ENCODE measurements at regions of chr13 and their contacts with region 1.

Region 1: DNA sequence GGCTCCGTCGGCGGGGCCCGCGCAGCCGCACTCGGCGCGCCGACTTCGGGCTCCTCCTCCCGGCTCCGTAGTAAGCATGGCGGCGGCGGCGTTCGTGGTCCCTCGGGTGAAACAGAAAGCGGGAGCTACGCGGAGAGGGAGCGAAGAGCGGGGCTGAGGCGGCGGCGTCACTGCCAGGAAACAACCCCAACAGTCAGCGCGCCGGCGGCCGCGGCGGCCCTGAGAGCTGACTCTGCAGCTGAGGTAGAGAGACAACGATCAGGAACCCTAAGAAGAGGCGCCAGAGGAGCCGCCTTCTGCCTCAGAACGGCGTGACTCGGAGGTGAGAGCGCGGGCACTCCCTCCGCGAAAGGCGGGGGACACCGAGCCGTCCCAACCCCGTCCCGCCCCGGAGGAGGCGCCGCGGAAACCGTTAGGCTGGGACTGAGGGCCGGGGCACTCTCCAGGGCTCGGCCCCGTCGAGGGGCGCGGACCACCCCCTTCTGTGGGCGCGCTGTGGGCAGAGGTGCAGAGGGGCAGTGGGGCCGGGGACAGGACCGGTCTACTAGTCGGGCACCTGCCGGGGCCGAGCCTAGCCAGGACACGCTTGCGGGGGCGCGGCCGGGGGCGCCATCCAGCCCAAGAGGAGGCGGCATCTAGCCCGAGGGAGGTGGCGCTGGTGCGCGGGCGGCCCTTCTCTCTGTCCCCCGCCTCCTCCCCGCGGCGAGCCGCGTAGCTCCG is at the start of gene FNDC3A:
- DNase-seq: peak; percentile 90
- H3K4me3 ChIP-seq: peak within 1 kb of the TSS; percentile 80 to 95 (median 92)
- H3K27ac ChIP-seq: peak within 1 kb of the TSS; percentile 99 to 100 (median 99)
- H3K4me1 ChIP-seq: peaks cover 0 to 45% (median 38%) of the 10 kb centered on the region in 4 donors
- H3K27me3 ChIP-seq: no peaks in the 10 kb centered on the region
- CTCF ChIP-seq: no peak
- EP300 ChIP-seq: no peak
- POLR2A ChIP-seq: no peak
- total RNA-seq, gene FNDC3A: 47.8 to 61.4 (median 54.3) TPM

Region 2: DNA sequence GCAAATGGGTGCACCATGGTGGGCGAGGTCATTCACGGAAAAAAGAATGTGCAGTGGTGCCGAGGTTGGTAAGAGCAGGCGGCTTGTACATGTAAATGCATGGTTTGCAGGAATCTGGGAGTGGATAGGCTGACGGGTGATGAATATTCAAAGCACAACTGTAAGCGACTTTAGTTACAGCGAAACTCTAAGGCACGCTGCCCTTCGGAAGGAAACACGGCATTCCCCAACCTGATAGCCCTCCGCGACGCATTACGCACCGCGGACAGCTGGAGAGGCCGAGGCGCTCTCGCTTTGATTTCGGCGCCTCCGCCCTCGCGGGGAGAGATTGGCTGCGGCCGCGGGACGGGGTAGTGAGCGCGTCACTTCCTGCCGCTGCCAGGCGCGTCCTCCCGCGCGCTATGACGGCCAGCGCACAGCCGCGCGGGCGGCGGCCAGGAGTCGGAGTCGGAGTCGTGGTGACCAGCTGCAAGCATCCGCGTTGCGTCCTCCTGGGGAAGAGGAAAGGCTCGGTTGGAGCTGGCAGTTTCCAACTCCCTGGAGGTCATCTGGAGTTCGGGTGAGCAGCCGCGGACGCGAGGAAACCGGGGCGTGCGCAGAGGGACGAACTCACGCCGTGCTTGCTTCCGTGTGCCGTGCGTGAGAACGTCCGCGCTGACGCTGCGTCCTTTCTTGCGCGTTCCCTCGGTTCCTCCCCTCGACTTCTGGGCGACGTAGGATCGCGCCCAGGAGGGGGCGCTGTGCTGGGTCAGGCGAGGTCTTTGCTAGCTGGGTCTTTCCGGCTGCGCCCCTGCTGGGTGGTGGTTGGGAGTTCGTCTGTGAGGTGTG is 938.5 kb before region 1 on chr13 and contains the start of gene NUDT15:
- intact Hi-C with region 1: no loop called
- DNase-seq: peak; percentile 96
- H3K4me3 ChIP-seq: peak within 1 kb of the TSS; percentile 62 to 78 (median 77)
- H3K27ac ChIP-seq: peak within 1 kb of the TSS; percentile 91 to 97 (median 96)
- H3K4me1 ChIP-seq: peaks cover 0 to 14% (median 14%) of the 10 kb centered on the region in 4 donors
- H3K27me3 ChIP-seq: no peaks in the 10 kb centered on the region
- CTCF ChIP-seq: peak; percentile 88 to 98 (median 98)
- EP300 ChIP-seq: peak in 3 of 4 donors; percentile 33 to 81 (median 76)
- POLR2A ChIP-seq: peak; percentile 59 to 66
- total RNA-seq, gene NUDT15: 6.6 to 8.9 (median 7.8) TPM

Region 3: DNA sequence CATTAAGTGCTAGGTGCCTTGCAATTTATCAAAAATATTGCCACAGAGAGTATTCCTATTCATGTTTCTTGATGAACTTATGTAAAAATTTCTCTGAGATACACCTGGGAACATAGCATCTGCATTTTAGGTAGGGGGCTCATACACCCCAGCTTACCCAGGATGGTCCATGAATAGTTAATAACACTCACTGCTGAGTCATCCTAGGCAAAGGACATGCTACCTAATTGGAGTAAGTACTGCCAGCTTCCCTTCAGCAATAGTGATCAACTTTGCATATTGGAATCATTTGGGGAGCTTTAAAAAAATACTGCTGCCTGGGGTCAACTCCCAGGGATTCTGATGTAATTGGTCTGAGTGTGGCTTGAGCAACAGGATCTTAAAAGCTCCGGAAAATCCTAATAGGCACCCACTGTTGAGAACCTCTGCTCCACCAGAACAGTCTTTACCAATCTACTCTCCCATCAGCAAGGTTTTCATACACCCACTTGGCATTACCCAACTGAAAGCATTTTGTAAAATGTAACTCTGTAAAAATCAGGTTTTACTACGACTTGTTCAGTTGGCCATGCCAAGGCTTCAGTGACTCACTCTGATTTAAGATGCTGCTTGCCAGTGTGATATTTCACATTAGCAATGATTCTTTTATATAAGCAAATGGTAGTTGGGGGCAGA is 67.5 kb before region 1 on chr13:
- intact Hi-C with region 1: loop called (anchors 2 kb)
- DNase-seq: no peak
- H3K4me3 ChIP-seq: no peak overlapping the region
- H3K27ac ChIP-seq: peak overlapping the region in 3 of 4 donors; percentile 50 to 64 (median 54)
- H3K4me1 ChIP-seq: peaks cover 0 to 19% (median 10%) of the 10 kb centered on the region in 4 donors
- H3K27me3 ChIP-seq: no peaks in the 10 kb centered on the region
- CTCF ChIP-seq: no peak
- EP300 ChIP-seq: peak in 1 of 4 donors; percentile 30
- POLR2A ChIP-seq: no peak

Region 4: DNA sequence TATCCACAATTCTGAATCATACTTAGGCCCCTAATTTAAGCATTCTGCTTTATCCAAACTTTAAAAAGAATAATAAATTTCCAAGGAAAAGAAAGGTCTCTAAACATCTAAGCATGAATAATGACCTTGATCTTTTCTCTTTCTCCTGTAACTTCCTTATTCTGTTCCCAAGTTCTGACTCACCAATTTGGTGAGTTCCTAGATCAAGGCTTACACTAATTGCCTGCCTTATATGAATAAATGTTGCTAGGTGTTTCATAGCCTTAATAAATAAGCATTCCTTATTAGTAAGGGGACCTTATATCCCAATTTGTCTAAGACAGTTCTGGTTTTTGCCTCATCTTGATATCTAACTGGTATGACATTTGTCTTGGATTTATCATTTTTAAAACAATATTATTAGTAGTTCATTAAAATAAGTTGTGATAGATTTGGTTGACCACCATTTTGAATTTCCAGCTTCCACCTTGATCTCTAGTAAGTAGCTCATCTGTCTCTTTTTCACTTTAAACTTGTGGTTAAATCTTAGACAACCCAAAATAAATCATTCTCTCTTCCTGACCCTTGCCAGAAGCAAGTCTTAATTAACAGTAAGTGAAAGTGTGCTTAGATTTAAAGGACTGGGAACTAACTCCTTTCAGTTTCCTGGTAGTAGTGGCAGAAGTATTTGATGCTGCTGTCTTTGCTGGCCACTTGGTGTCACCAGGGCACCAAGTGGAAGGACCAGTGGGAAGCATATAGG is 122.9 kb after region 1 on chr13:
- intact Hi-C with region 1: loop called (anchors 5 kb)
- DNase-seq: no peak
- H3K4me3 ChIP-seq: no peak overlapping the region
- H3K27ac ChIP-seq: peak overlapping the region; percentile 47 to 80 (median 72)
- H3K4me1 ChIP-seq: peaks cover 0 to 27% (median 22%) of the 10 kb centered on the region in 4 donors
- H3K27me3 ChIP-seq: no peaks in the 10 kb centered on the region
- CTCF ChIP-seq: peak in 2 of 4 experiments; percentile 8 to 11
- EP300 ChIP-seq: no peak
- POLR2A ChIP-seq: no peak

Region 5: DNA sequence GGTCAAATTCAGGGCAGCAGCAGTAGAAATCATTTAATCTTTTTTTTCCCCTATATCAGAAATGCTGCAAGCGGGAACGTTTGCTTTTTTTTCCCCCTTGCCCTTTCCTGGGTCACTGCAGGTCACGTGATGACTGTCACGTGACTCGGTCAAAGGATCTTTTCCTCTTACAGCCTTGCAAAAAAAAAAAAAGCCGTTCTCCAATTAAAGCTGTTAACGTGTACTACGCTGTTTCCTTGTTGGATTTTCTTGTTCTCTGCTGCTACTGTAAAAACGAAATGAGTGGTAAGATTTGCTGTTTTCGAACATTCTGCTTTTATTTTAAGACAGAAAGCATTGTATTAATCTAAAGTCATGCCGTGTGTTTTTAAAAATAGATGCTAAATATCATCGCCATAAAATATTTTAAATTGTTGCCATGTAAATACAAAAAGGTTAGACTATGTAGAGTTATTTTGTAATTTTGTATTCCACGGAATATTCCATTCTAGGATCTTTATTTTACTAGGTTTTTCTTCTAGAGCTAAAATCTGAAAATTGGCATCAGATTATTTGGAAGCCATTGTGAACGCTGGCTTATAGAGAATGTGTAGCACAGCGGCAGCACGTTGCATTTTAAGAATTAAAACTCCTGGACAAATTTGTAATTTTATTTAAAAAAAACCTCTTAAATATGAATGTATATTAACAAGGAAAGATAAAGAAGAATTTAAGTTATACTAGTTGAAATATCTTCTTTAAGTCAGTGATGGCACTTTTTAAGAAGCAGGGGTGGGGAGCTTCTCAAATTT is 134.3 kb after region 1 on chr13:
- intact Hi-C with region 1: loop called (anchors 1 kb)
- DNase-seq: peak; percentile 91
- H3K4me3 ChIP-seq: peak overlapping the region; percentile 27 to 57 (median 49)
- H3K27ac ChIP-seq: peak overlapping the region; percentile 35 to 70 (median 65)
- H3K4me1 ChIP-seq: peaks cover 0 to 39% (median 35%) of the 10 kb centered on the region in 4 donors
- H3K27me3 ChIP-seq: no peaks in the 10 kb centered on the region
- CTCF ChIP-seq: no peak
- EP300 ChIP-seq: peak in 1 of 4 donors; percentile 18
- POLR2A ChIP-seq: no peak

Region 6: DNA sequence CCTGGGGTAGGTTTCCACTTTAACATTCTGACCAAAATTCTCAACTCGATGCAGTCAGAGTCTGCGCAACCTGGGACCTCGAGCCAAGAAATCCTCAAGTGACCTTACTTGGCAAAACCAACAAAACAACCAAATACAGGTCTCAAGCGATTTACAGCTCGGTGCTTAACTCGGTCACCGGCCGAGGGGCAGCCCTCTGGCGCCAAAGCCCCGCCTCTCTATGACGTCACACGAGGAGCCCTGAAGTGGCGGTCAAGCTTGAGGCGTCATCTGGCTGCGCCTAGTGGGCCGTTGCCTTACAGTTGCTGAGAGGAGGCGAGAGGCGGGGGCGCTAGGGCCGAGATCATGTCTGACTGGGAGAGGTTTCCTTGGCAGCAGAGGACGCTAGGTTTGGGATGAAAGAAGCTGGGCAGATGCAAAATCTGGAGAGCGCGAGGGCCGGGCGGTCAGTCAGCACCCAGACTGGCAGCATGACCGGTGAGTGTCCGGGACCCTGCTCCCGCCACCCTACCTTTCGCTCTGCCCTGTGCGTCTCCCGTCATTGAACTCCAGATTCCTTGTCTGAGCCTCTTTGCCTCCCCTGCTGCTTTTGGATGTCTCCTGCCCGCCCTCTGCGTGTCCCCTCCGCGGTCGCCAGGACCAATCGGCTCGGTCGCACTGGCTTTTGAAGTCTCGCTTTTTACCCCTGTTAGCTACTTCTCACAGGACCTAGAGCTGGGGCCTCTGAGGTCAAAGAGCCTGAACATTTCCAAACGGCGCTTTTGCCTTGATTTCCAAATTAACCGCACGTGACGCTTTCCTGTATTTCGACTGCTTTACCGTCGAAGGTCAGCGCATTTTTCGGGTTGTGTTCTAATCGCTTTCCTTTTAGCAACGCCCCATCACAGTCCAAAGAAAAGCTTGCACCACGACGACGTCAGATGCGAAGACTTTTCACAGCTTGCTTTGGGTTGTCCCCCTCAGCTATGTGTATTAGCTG is 271.9 kb after region 1 on chr13 and contains the start of gene CDADC1:
- intact Hi-C with region 1: loop called (anchors 10 kb)
- DNase-seq: peak; percentile 99
- H3K4me3 ChIP-seq: peak within 1 kb of the TSS; percentile 76 to 85 (median 81)
- H3K27ac ChIP-seq: peak within 1 kb of the TSS; percentile 88 to 93 (median 90)
- H3K4me1 ChIP-seq: peaks cover 2 to 41% (median 23%) of the 10 kb centered on the region in 4 donors
- H3K27me3 ChIP-seq: no peaks in the 10 kb centered on the region
- CTCF ChIP-seq: no peak
- EP300 ChIP-seq: peak in 2 of 4 donors; percentile 42 to 65
- POLR2A ChIP-seq: peak; percentile 88 to 89
- total RNA-seq, gene CDADC1: 6.5 to 12.2 (median 8.1) TPM

Region 7: GRCh38 chr13:49585220-49586157 is 609.5 kb after region 1 on chr13 and contains the start of gene RCBTB1:
- intact Hi-C with region 1: loop called (anchors 10 kb)
- DNase-seq: peak; percentile 79
- H3K4me3 ChIP-seq: peak within 1 kb of the TSS; percentile 70 to 89 (median 80)
- H3K27ac ChIP-seq: peak within 1 kb of the TSS; percentile 79 to 80 (median 80)
- H3K4me1 ChIP-seq: peaks cover 0 to 21% (median 14%) of the 10 kb centered on the region in 4 donors
- H3K27me3 ChIP-seq: no peaks in the 10 kb centered on the region
- CTCF ChIP-seq: no peak
- EP300 ChIP-seq: no peak
- POLR2A ChIP-seq: no peak
- total RNA-seq, gene RCBTB1: 10.2 to 20.7 (median 12.5) TPM